HEK293T (cell line): ENCODE measurements at regions of chr11 and their contacts with region 1.

Region 1: GRCh38 chr11:6234387-6235107 is at the start of gene FHIP1B:
- DNase-seq: peak; percentile 94

Region 2: DNA sequence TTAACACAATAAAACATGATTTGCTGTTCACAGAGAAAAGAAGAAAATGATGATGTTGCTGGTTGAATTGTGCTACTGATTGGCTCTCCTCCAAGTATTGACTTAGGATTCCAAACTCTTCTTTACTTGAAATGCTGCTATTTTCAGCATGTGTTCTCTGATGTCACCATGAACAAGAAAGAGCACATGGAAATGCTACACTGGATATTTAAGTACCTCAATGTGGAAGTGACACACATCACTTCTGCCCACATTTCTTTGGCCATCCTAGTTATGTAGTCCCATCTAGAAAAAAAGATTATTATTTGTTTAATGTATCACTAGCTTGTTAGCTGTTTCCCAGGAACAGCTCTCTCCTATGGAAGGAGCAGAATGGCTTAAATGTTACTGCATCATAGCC is 91.6 kb before region 1 on chr11:
- CTCF ChIA-PET with region 1: no interaction called
- POLR2A ChIA-PET with region 1: no interaction called
- DNase-seq: no peak

Region 3: DNA sequence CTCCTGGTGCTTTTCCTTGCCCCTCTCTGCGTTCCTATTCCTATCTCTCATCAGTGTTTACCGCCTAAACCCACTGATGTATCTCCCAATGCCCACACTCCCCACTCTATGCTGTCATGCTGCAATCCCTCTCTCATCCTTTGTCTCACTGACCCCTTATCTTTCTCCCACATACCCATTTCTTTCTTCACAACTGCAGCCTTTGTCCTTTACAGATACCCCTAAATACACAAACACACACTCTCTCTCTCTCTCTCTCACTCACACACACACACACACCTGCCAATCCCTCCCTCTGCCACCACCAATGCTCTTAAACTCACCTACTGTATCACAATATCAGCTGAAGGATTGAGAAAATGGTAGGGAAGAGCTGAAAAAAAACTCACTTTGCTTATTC is 59.1 kb before region 1 on chr11:
- CTCF ChIA-PET with region 1: no interaction called
- POLR2A ChIA-PET with region 1: no interaction called
- DNase-seq: no peak

Region 4: GRCh38 chr11:6217722-6218121 is 16.8 kb before region 1 on chr11:
- CTCF ChIA-PET with region 1: no interaction called
- POLR2A ChIA-PET with region 1: no interaction called
- DNase-seq: no peak

Region 5: GRCh38 chr11:6258571-6259081 is 24.1 kb after region 1 on chr11:
- CTCF ChIA-PET with region 1: interaction called, 3 read pairs
- POLR2A ChIA-PET with region 1: interaction called, 18 read pairs
- DNase-seq: peak; percentile 14